ENCODE measurements at regions of chr3 and their contacts with region 1.

Region 1: GRCh38 chr3:171809821-171810628 is at the start of gene PLD1:
- DNase-seq: peak; percentile 80
- ATAC-seq: peak; percentile 59
- H3K4me3 ChIP-seq: peak within 1 kb of the TSS; percentile 78
- H3K27ac ChIP-seq: peak within 1 kb of the TSS; percentile 90
- H3K4me1 ChIP-seq: peaks cover 50% of the 10 kb centered on the region
- H3K27me3 ChIP-seq: no peaks in the 10 kb centered on the region
- CTCF ChIP-seq: no peak
- total RNA-seq, gene PLD1: 7.3 and 8.3 TPM in 2 replicates

Region 2: DNA sequence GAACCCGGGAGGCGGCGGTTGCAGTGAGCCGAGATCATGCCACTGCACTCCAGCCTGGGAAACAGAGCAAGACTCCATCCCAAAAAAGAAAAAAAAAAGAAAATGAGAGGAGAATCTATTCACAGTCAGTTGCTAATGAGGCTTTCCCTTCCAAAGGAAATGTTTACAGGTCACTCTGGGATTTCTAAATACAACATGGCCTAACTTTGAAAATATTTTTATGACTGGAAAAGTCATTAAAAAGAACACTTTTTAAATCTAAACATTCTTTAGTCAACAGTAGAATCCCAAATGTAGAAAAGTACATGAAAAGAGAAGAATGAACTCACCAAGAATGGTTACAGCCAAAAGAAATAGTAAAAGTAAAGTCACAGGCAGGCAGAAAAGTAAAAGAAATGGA is 78.3 kb before region 1 on chr3:
- CTCF ChIA-PET with region 1: no interaction called
- POLR2A ChIA-PET with region 1: no interaction called
- intact Hi-C with region 1: no loop called
- DNase-seq: no peak
- ATAC-seq: no peak
- H3K4me3 ChIP-seq: no peak overlapping the region
- H3K27ac ChIP-seq: no peak overlapping the region
- H3K4me1 ChIP-seq: no peaks in the 10 kb centered on the region
- H3K27me3 ChIP-seq: no peaks in the 10 kb centered on the region
- CTCF ChIP-seq: no peak

Region 3: GRCh38 chr3:171772427-171773056 is 37.5 kb before region 1 on chr3:
- CTCF ChIA-PET with region 1: interaction called, 10 read pairs
- POLR2A ChIA-PET with region 1: interaction called, 4 read pairs
- intact Hi-C with region 1: no loop called
- DNase-seq: peak; percentile 74
- ATAC-seq: peak; percentile 45
- H3K4me3 ChIP-seq: no peak overlapping the region
- H3K27ac ChIP-seq: no peak overlapping the region
- H3K4me1 ChIP-seq: peaks cover 20% of the 10 kb centered on the region
- H3K27me3 ChIP-seq: no peaks in the 10 kb centered on the region
- CTCF ChIP-seq: peak; percentile 91

Region 4: DNA sequence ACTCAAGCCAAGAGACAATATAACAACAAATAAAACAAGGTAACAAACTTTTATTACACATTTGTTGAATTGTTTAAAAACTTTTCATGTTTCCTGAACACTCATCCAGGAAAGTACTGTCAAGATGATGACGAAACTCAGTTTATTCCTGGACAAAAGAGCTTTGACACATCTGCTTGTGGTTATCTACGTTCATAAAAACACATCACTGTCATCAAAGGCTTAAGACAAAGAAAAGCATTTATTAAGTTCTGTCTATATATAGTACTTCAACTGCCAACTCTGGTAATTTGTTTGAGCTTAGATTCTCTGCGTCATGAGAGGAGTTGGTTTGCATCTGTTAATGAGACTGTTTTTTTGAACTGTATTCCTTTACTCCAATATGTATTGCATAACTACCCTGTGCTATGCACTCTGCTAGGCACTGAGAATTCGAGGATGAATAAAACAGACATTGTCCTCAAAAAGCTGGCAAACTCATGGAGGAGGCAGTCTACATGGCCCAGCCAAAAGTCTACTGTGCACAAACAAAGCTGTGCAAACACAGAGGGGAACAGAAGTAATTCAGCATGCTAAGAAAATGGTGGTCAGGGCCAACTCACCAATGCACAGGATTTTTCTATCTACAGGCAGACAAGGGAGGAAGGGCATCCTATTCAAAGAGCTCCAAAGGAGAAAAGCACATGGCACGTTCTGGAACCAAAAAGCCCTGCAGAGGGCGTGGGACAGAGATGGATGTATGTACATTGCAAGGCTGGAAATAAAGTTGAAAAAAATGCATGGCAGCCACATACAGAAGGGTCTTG is 21.3 kb before region 1 on chr3:
- CTCF ChIA-PET with region 1: no interaction called
- POLR2A ChIA-PET with region 1: interaction called, 14 read pairs
- intact Hi-C with region 1: loop called (anchors 1 kb)
- DNase-seq: peak; percentile 87
- ATAC-seq: peak; percentile 70
- H3K4me3 ChIP-seq: no peak overlapping the region
- H3K27ac ChIP-seq: peak overlapping the region; percentile 90
- H3K4me1 ChIP-seq: peaks cover 53% of the 10 kb centered on the region
- H3K27me3 ChIP-seq: no peaks in the 10 kb centered on the region
- CTCF ChIP-seq: peak; percentile 43

Region 5: GRCh38 chr3:171950373-171950772 is 140.3 kb after region 1 on chr3:
- CTCF ChIA-PET with region 1: no interaction called
- POLR2A ChIA-PET with region 1: interaction called, 11 read pairs
- intact Hi-C with region 1: no loop called
- DNase-seq: peak; percentile 76
- ATAC-seq: peak; percentile 53
- H3K4me3 ChIP-seq: no peak overlapping the region
- H3K27ac ChIP-seq: peak overlapping the region; percentile 38
- H3K4me1 ChIP-seq: peaks cover 68% of the 10 kb centered on the region
- H3K27me3 ChIP-seq: no peaks in the 10 kb centered on the region
- CTCF ChIP-seq: no peak

Measured in PC-3 (cell line).